ENCODE measurements at regions of chr9 and their contacts with region 1.

Region 1: DNA sequence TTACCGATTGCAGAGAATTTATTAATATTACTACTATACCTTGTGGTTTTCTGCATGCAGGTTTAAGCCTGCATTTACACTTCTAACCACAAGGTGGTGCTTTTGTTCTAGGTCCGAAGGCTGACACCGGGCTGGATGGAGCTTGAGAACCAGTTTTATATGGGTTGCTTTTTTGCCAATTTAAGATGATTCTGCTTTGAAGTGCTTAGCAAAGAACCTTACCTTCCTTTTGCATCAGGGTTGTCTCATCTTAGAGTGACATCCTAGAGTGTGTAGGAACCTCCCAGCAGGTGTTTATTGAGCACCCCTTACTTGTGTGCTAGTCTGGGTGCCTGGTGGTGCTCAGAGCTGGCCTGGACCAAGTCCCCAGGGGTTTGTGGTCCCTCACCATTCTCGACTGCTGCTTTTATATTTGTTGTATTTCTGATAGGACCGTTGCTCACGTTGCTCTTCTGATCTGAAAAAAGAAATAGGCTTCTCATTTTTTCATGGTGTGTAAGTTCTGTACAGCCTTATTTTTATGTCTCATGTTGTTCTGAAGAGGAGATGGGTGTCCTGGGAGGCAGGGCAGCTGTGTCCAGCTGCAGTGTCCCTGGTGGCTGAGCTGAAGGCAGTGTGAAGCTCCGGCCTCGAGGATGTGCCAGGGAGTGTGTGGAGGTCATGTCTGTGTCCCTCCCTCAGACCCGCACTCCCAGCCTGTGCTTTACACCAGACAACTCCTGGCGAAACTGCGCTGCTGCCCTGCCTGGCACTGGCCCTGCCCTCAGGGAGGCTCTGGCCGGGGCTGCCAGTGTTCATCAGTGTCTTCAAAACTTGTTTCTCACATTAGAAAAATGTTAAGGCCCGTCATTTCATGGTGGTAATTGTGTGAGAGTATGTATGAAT is 54.3 kb downstream of the EHMT1 start:
- DNase-seq: peak; percentile 67
- ATAC-seq: peak; percentile 96
- H3K4me3 ChIP-seq: no peak overlapping the region
- H3K27ac ChIP-seq: peak overlapping the region; percentile 72
- H3K4me1 ChIP-seq: peaks cover 12% of the 10 kb centered on the region
- H3K27me3 ChIP-seq: no peaks in the 10 kb centered on the region
- CTCF ChIP-seq: peak; percentile 77 to 95 (median 94)
- EP300 ChIP-seq: peak; percentile 20 to 77; a peak in 1 of 4 replicates
- POLR2A ChIP-seq: no peak
- RAD21 ChIP-seq: peak; percentile 97

Region 2: GRCh38 chr9:137396227-137396626 is 276.9 kb before region 1 on chr9:
- CTCF ChIA-PET with region 1: no interaction called
- POLR2A ChIA-PET with region 1: no interaction called
- RAD21 ChIA-PET with region 1: no interaction called
- SMC1A ChIA-PET with region 1: no interaction called
- in situ Hi-C with region 1: no loop called
- intact Hi-C with region 1: no loop called
- DNase-seq: no peak
- ATAC-seq: no peak
- H3K4me3 ChIP-seq: no peak overlapping the region
- H3K27ac ChIP-seq: no peak overlapping the region
- H3K4me1 ChIP-seq: no peaks in the 10 kb centered on the region; the same call in 1 of the 2 replicates
- H3K27me3 ChIP-seq: no peaks in the 10 kb centered on the region
- CTCF ChIP-seq: no peak
- EP300 ChIP-seq: no peak
- POLR2A ChIP-seq: no peak
- RAD21 ChIP-seq: no peak

Region 3: DNA sequence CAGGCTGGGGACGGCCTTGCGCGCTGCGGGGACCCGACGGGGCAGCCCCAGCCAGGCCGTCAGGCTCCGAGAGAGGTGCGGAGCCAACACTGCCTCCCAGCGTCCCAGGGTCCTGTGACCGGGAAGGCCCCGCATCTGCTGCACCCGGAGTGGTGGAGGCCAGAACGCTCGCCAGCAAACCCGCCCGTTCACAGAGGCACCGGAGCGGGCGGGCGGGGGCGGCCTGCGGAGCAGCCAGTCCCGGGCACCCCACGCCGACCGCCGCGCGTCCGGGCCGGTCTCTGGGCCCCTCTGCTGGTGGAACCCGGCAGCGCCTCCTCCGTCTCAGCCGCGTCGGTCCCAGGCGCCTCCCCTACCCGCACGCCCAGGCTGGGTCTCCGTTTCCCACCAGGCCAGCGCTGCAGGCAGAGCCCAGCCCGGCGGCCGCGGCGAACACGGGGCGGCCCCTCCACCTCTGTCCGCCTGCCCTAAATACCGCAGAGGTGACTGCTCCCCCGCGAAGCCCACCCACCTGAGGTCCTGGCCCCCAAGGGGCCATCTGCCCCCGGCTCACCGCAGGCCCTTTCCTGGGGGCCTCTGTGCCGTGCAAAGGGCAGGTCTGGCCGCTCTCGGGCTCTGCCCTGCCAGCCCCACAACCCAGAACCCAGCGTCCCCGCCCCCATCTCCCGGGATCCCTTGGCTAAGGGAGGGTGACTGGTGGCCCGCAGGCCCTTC is 266.1 kb before region 1 on chr9:
- CTCF ChIA-PET with region 1: no interaction called
- POLR2A ChIA-PET with region 1: no interaction called
- RAD21 ChIA-PET with region 1: no interaction called
- SMC1A ChIA-PET with region 1: no interaction called
- in situ Hi-C with region 1: no loop called
- intact Hi-C with region 1: no loop called
- DNase-seq: no peak
- ATAC-seq: peak; percentile 86
- H3K4me3 ChIP-seq: peak overlapping the region; percentile 55; the same call in 1 of the 2 replicates
- H3K27ac ChIP-seq: peak overlapping the region; percentile 39; the same call in 1 of the 2 replicates
- H3K4me1 ChIP-seq: peaks cover 19% of the 10 kb centered on the region
- H3K27me3 ChIP-seq: no peaks in the 10 kb centered on the region
- CTCF ChIP-seq: peak; percentile 54 to 73 (median 71); a peak in 5 of 6 replicates
- EP300 ChIP-seq: no peak
- POLR2A ChIP-seq: no peak; the same call in 1 of the 2 replicates
- RAD21 ChIP-seq: peak; percentile 73

Region 4: GRCh38 chr9:137545123-137545522 is 128.0 kb before region 1 on chr9:
- CTCF ChIA-PET with region 1: no interaction called
- POLR2A ChIA-PET with region 1: no interaction called
- RAD21 ChIA-PET with region 1: no interaction called
- SMC1A ChIA-PET with region 1: no interaction called
- in situ Hi-C with region 1: no loop called
- intact Hi-C with region 1: no loop called
- DNase-seq: no peak
- ATAC-seq: no peak
- H3K4me3 ChIP-seq: no peak overlapping the region
- H3K27ac ChIP-seq: no peak overlapping the region
- H3K4me1 ChIP-seq: peaks cover 6% of the 10 kb centered on the region
- H3K27me3 ChIP-seq: no peaks in the 10 kb centered on the region; a peak in 1 of 4 replicates
- CTCF ChIP-seq: no peak
- EP300 ChIP-seq: no peak
- POLR2A ChIP-seq: no peak
- RAD21 ChIP-seq: no peak

Region 5: GRCh38 chr9:137611623-137612463 is 61.3 kb before region 1 on chr9:
- CTCF ChIA-PET with region 1: no interaction called
- POLR2A ChIA-PET with region 1: no interaction called
- RAD21 ChIA-PET with region 1: no interaction called
- SMC1A ChIA-PET with region 1: no interaction called
- in situ Hi-C with region 1: no loop called
- intact Hi-C with region 1: no loop called
- DNase-seq: no peak
- ATAC-seq: peak; percentile 56
- H3K4me3 ChIP-seq: no peak overlapping the region
- H3K27ac ChIP-seq: no peak overlapping the region
- H3K4me1 ChIP-seq: peaks cover 6% of the 10 kb centered on the region
- H3K27me3 ChIP-seq: no peaks in the 10 kb centered on the region
- CTCF ChIP-seq: no peak
- EP300 ChIP-seq: no peak
- POLR2A ChIP-seq: peak; percentile 18
- RAD21 ChIP-seq: no peak

Region 6: GRCh38 chr9:137740312-137740711 is 67.2 kb after region 1 on chr9:
- CTCF ChIA-PET with region 1: interaction called, 12 read pairs
- POLR2A ChIA-PET with region 1: no interaction called
- RAD21 ChIA-PET with region 1: interaction called, 10 read pairs
- SMC1A ChIA-PET with region 1: interaction called, 7 read pairs
- in situ Hi-C with region 1: no loop called
- intact Hi-C with region 1: loop called (anchors 2 kb)
- DNase-seq: no peak
- ATAC-seq: no peak
- H3K4me3 ChIP-seq: no peak overlapping the region
- H3K27ac ChIP-seq: no peak overlapping the region
- H3K4me1 ChIP-seq: peaks cover 48% of the 10 kb centered on the region
- H3K27me3 ChIP-seq: no peaks in the 10 kb centered on the region
- CTCF ChIP-seq: no peak
- EP300 ChIP-seq: no peak
- POLR2A ChIP-seq: no peak
- RAD21 ChIP-seq: no peak

Region 7: GRCh38 chr9:137757613-137758029 is 84.5 kb after region 1 on chr9:
- CTCF ChIA-PET with region 1: interaction called, 16 read pairs
- POLR2A ChIA-PET with region 1: no interaction called
- RAD21 ChIA-PET with region 1: interaction called, 15 read pairs
- SMC1A ChIA-PET with region 1: interaction called, 11 read pairs
- in situ Hi-C with region 1: no loop called
- intact Hi-C with region 1: loop called (anchors 1 kb)
- DNase-seq: peak; percentile 69
- ATAC-seq: peak; percentile 62
- H3K4me3 ChIP-seq: peak overlapping the region; percentile 31; the same call in 1 of the 2 replicates
- H3K27ac ChIP-seq: peak overlapping the region; percentile 96
- H3K4me1 ChIP-seq: peaks cover 58% of the 10 kb centered on the region
- H3K27me3 ChIP-seq: no peaks in the 10 kb centered on the region
- CTCF ChIP-seq: no peak
- EP300 ChIP-seq: peak; percentile 67 to 87; a peak in 3 of 4 replicates
- POLR2A ChIP-seq: no peak
- RAD21 ChIP-seq: no peak

Region 8: GRCh38 chr9:137918331-137919094 is 245.4 kb after region 1 on chr9:
- CTCF ChIA-PET with region 1: no interaction called
- POLR2A ChIA-PET with region 1: no interaction called
- RAD21 ChIA-PET with region 1: no interaction called
- SMC1A ChIA-PET with region 1: no interaction called
- in situ Hi-C with region 1: no loop called
- intact Hi-C with region 1: loop called (anchors 10 kb)
- DNase-seq: no peak
- ATAC-seq: no peak
- H3K4me3 ChIP-seq: no peak overlapping the region
- H3K27ac ChIP-seq: no peak overlapping the region
- H3K4me1 ChIP-seq: no peaks in the 10 kb centered on the region
- H3K27me3 ChIP-seq: no peaks in the 10 kb centered on the region
- CTCF ChIP-seq: no peak
- EP300 ChIP-seq: no peak
- POLR2A ChIP-seq: no peak
- RAD21 ChIP-seq: no peak

Region 9: GRCh38 chr9:138112791-138113600 is 439.8 kb after region 1 on chr9:
- CTCF ChIA-PET with region 1: interaction called, 3 read pairs
- POLR2A ChIA-PET with region 1: no interaction called
- RAD21 ChIA-PET with region 1: no interaction called
- SMC1A ChIA-PET with region 1: no interaction called
- in situ Hi-C with region 1: loop called (anchors 10 kb)
- intact Hi-C with region 1: no loop called
- DNase-seq: no peak
- ATAC-seq: no peak
- H3K4me3 ChIP-seq: no peak overlapping the region
- H3K27ac ChIP-seq: no peak overlapping the region
- H3K4me1 ChIP-seq: no peaks in the 10 kb centered on the region
- H3K27me3 ChIP-seq: no peaks in the 10 kb centered on the region
- CTCF ChIP-seq: no peak
- EP300 ChIP-seq: no peak
- POLR2A ChIP-seq: no peak
- RAD21 ChIP-seq: no peak

Measured in GM12878 (cell line).